Activated CD4-positive, alpha-beta memory T cell treated with anti-CD3 and anti-CD28 coated beads for 36 hours (primary cell): ENCODE measurements at regions of chr17 and their contacts with region 1.

Region 1: GRCh38 chr17:77404812-77405581 is 264.2 kb downstream of the SEC14L1 start:
- DNase-seq: peak; percentile 94
- H3K4me3 Mint-ChIP-seq: peak overlapping the region; percentile 94
- H3K27ac Mint-ChIP-seq: peak overlapping the region; percentile 91
- H3K4me1 Mint-ChIP-seq: peaks cover 88% of the 10 kb centered on the region
- H3K27me3 Mint-ChIP-seq: no peaks in the 10 kb centered on the region

Region 2: GRCh38 chr17:77331301-77331864 is 73.6 kb before region 1 on chr17:
- CTCF ChIA-PET with region 1: interaction called, 65 read pairs
- POLR2A ChIA-PET with region 1: interaction called, 3 read pairs
- intact Hi-C with region 1: loop called (anchors 2 kb)
- DNase-seq: peak; percentile 97
- H3K4me3 Mint-ChIP-seq: peak overlapping the region; percentile 64
- H3K27ac Mint-ChIP-seq: peak overlapping the region; percentile 78
- H3K4me1 Mint-ChIP-seq: peaks cover 38% of the 10 kb centered on the region
- H3K27me3 Mint-ChIP-seq: no peaks in the 10 kb centered on the region

Region 3: GRCh38 chr17:77391668-77392375 is 13.2 kb before region 1 on chr17:
- CTCF ChIA-PET with region 1: interaction called, 77 read pairs
- POLR2A ChIA-PET with region 1: interaction called, 28 read pairs
- intact Hi-C with region 1: loop called (anchors 1 kb)
- DNase-seq: peak; percentile 78
- H3K4me3 Mint-ChIP-seq: peak overlapping the region; percentile 47
- H3K27ac Mint-ChIP-seq: peak overlapping the region; percentile 88
- H3K4me1 Mint-ChIP-seq: peaks cover 67% of the 10 kb centered on the region
- H3K27me3 Mint-ChIP-seq: no peaks in the 10 kb centered on the region

Region 4: DNA sequence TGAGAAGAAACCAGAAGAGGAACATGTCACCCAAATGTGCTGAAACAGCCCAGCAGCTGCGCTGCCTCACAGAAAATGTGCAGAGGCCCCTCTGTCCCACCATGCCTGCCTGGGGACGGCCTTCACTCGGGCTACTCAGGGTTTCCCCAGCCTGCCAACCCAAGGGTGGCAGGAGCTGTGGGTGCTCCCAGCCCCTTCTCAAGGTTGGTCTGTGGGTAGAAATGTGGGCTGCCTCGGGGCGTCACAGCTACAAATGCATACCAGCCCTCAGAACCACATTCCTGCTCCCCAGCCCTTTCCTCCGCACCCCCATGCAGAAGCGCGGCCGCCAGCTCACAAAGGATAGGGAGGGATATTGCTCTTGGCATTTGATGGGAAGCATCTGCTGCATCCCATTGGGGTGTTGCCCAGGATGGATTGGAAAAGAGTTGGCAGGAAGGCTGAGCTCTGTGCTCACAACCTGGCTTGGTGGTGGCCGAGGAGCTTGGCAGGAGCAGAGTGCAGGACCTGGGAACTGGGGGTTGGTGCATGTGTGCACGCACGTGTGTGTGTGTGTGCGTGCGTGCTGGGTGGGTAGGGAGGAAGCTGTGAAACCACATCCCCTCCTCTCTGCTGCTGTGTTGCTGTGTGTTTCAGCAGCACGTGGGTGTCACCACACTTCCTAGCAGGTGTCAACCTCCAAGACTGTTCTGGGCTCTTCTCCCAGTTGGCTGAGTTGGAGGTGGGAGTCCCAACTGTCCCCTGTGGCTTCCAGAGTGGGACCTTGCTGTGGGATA is 40.2 kb after region 1 on chr17:
- CTCF ChIA-PET with region 1: interaction called, 21 read pairs
- POLR2A ChIA-PET with region 1: interaction called, 8 read pairs
- intact Hi-C with region 1: loop called (anchors 2 kb)
- DNase-seq: peak; percentile 91
- H3K4me3 Mint-ChIP-seq: peak overlapping the region; percentile 72
- H3K27ac Mint-ChIP-seq: peak overlapping the region; percentile 98
- H3K4me1 Mint-ChIP-seq: peaks cover 91% of the 10 kb centered on the region
- H3K27me3 Mint-ChIP-seq: no peaks in the 10 kb centered on the region

Region 5: GRCh38 chr17:77462101-77462500 is 57.1 kb after region 1 on chr17:
- CTCF ChIA-PET with region 1: interaction called, 29 read pairs
- POLR2A ChIA-PET with region 1: interaction called, 10 read pairs
- intact Hi-C with region 1: loop called (anchors 2 kb)
- DNase-seq: peak; percentile 72
- H3K4me3 Mint-ChIP-seq: peak overlapping the region; percentile 91
- H3K27ac Mint-ChIP-seq: peak overlapping the region; percentile 100
- H3K4me1 Mint-ChIP-seq: peaks cover 83% of the 10 kb centered on the region
- H3K27me3 Mint-ChIP-seq: no peaks in the 10 kb centered on the region